GM23248 (cell line): ENCODE measurements at regions of chr10 and their contacts with region 1.

Region 1: DNA sequence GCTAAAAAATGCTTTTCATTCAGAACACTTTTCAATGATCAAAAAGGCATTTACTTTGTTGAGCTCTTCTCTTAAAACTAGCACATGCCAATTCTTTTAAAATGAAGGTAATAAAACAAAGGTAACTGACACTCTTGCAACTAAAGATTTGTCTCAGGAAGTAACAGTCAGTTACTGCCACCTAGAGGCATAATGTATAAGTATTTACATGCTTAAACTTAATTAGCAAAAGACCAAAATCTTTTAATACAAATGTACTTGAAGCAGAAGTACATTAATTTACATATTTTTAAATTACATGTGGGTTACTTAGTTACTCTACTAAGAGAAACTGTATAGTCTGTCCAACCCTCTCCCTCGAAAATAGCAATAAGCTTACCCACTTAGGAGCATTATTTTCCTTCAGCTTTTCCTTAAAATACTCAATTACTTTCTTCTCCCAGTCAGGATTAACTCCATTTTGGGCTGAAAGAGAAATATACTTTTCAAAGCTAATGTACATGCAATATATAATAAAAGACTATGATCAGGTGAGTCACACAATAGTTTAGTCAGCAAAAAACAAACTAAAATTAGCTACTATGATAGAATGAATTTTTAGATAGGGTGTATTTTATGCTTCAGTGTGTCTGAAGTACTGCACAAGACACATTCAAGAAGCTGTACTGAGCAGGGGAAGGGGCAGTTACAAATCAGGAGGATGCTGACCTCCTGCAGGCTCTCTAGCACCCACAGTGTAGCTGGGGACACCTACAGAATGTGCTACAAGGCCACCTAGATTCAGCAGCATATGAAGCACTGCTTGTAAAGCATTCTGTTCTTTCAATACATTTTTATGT is 13.0 kb downstream of the MCMBP start:
- DNase-seq: peak; percentile 69
- H3K4me3 ChIP-seq: no peak overlapping the region
- H3K27ac ChIP-seq: no peak overlapping the region
- H3K4me1 ChIP-seq: peaks cover 4% of the 10 kb centered on the region; the same call in 1 of the 2 replicates
- H3K27me3 ChIP-seq: no peaks in the 10 kb centered on the region

Region 2: GRCh38 chr10:119608316-119609155 is 251.1 kb before region 1 on chr10:
- in situ Hi-C with region 1: loop called (anchors 10 kb)
- DNase-seq: peak; percentile 65
- H3K4me3 ChIP-seq: no peak overlapping the region
- H3K27ac ChIP-seq: no peak overlapping the region
- H3K4me1 ChIP-seq: no peaks in the 10 kb centered on the region
- H3K27me3 ChIP-seq: no peaks in the 10 kb centered on the region

Region 3: GRCh38 chr10:119686439-119687191 is 173.0 kb before region 1 on chr10:
- in situ Hi-C with region 1: loop called (anchors 10 kb)
- DNase-seq: peak; percentile 94
- H3K4me3 ChIP-seq: peak overlapping the region; percentile 69
- H3K27ac ChIP-seq: peak overlapping the region; percentile 55
- H3K4me1 ChIP-seq: peaks cover 20% of the 10 kb centered on the region
- H3K27me3 ChIP-seq: no peaks in the 10 kb centered on the region

Region 4: DNA sequence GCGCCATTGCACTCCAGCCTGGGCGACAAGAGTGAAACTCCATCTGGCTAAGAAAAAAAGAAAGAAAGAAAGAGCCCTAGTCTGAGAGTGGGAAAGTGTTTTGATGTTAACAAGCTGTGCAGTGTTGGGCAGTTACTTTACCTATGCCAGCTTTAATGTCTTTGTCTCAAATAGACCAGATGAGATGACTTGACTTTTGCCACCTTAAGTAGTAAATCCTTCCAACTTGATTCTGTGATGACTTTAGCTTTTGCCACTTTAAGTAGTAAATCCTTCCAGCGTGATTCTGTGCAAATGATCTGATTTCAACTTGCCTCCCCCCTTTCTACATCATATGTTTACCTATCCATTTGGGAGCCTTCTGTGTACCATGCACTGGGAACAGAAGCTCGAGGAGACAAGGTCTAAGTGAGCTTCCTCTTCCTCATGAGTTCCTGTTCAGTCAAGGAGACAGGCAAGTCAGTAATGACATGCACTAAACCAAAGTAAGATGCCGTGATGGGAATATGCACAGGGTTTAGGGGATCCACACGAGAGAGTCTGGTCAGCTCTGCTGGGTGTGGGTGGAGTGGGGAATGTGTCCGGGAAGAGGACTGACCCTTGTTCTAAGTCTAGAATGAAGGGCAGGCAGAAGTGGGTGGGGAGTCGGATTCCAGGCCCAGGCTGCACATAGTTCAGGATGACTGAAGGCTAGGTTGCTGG is 116.5 kb before region 1 on chr10:
- in situ Hi-C with region 1: loop called (anchors 10 kb)
- DNase-seq: no peak
- H3K4me3 ChIP-seq: no peak overlapping the region
- H3K27ac ChIP-seq: no peak overlapping the region
- H3K4me1 ChIP-seq: peaks cover 5% of the 10 kb centered on the region
- H3K27me3 ChIP-seq: no peaks in the 10 kb centered on the region

Region 5: DNA sequence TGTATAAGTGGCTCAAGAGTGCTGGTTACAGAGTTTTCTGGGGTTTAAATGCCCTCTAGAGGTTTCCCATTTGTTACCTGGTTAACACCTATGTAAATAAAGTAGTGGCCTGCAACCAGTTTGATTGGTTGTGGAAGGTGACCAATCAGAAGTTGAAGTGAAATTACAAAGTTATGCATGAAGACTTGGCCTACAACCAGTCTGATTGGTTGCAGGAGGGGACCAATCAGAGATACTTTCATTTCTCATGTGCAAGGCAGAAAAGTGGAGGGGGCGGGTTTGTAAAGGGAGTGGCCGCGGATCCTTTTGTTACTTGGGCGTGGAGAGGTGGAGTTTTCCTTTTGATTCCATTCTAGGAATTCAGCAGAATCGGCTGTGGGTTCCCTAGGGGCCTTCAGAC is 113.6 kb after region 1 on chr10:
- in situ Hi-C with region 1: no loop called
- DNase-seq: peak; percentile 10
- H3K4me3 ChIP-seq: no peak overlapping the region
- H3K27ac ChIP-seq: no peak overlapping the region
- H3K4me1 ChIP-seq: no peaks in the 10 kb centered on the region
- H3K27me3 ChIP-seq: no peaks in the 10 kb centered on the region

Region 6: GRCh38 chr10:120069700-120070099 is 210.1 kb after region 1 on chr10:
- in situ Hi-C with region 1: no loop called
- DNase-seq: no peak
- H3K4me3 ChIP-seq: no peak overlapping the region
- H3K27ac ChIP-seq: no peak overlapping the region
- H3K4me1 ChIP-seq: no peaks in the 10 kb centered on the region
- H3K27me3 ChIP-seq: no peaks in the 10 kb centered on the region

Region 7: DNA sequence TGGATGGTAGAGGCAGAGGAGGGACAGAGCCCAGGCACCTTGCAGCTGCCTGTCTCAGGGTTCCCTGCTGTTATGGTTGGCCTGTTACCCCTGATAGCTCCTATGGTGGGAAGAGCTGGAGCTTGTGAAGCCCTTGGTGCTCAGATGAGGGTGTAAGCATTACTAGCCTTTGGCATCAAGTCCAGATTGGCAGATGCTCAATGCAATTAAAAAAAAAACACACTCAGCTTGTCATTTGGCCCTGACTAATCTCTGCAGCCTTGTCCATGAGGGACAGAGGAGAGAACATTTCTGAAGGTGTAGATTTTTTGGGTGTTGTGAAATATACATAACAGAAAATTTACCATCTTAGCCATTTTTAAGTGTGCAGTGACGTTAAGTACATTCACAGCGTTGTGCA is 683.7 kb after region 1 on chr10:
- in situ Hi-C with region 1: no loop called
- DNase-seq: no peak
- H3K4me3 ChIP-seq: no peak overlapping the region
- H3K27ac ChIP-seq: no peak overlapping the region
- H3K4me1 ChIP-seq: no peaks in the 10 kb centered on the region
- H3K27me3 ChIP-seq: no peaks in the 10 kb centered on the region

Region 8: DNA sequence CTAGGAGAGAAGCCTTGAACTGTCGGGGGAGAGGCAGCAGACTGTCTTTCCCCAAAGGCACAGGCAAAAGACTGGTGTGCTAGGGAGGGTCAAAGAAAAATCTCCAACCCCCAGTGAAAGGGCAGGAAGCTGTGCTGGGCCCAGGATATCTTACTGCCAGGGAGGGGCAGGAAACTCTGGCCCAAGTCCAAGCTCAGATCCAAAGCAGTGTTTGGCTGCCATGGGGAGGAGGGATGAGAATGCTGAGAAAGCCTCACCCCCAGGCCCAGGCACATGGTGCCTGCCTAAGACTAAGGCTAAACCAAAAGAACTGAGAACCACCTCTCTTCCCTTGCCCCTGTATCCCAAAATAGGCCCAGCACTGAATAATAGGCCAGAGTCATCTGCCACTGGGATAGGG is 768.6 kb after region 1 on chr10:
- in situ Hi-C with region 1: no loop called
- DNase-seq: no peak
- H3K4me3 ChIP-seq: no peak overlapping the region
- H3K27ac ChIP-seq: no peak overlapping the region
- H3K4me1 ChIP-seq: no peaks in the 10 kb centered on the region
- H3K27me3 ChIP-seq: 0 out of 2 replicates have a peak, but pooled peaks cover 11% of the 10 kb centered on the region